ENCODE measurements at regions of chr2 and their contacts with region 1.

Region 1: DNA sequence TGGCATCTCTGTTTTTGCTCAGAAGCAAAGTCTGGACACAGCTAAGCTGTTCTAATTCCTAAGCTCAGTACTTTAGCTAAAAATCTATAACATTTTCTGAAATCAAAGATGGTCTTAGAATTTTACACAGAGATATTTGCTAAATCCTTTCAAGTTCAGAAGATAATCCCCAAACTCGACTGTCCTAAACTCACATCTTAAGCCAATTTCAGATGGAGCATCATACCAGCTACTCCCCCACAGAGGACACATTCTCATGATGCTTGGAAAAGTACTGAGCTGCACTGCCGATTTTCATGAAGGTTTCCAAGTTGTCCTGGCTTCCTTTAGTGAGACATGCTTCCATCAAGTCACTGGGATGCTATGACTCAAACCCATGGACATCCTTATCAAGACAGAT is 535.5 kb downstream of the SUCLG1 start:
- DNase-seq: no peak
- ATAC-seq: no peak
- H3K4me3 ChIP-seq: no peak overlapping the region
- H3K4me3 Mint-ChIP-seq: no peak overlapping the region
- H3K27ac ChIP-seq: no peak overlapping the region
- H3K27ac Mint-ChIP-seq: no peak overlapping the region
- H3K4me1 ChIP-seq: no peaks in the 10 kb centered on the region
- H3K4me1 Mint-ChIP-seq: no peaks in the 10 kb centered on the region
- H3K27me3 ChIP-seq: no peaks in the 10 kb centered on the region
- H3K27me3 Mint-ChIP-seq: peaks cover 2% of the 10 kb centered on the region
- CTCF ChIP-seq: no peak

Region 2: DNA sequence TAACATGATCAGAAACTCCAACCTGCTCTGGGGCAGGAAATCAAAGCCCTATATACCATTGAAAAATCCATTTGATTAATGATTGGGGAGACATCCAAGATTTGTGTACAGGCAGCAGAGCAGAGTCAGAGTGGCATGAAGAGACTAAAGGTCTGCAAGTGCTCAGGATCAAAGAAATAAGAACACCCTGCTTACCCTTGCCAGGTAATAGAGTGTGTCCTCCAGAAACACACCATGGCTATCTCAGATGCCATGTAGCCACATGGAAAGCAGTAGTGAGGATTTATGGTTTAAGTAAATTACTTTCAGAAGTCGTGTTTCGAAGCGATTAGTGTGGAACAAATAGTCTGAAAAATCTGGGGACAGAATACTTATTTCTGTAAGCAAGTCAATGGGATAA is 57.3 kb before region 1 on chr2:
- CTCF ChIA-PET with region 1: no interaction called
- POLR2A ChIA-PET with region 1: no interaction called
- intact Hi-C with region 1: loop called in 1 of 2 experiments (anchors 10 kb)
- DNase-seq: no peak
- ATAC-seq: no peak
- H3K4me3 ChIP-seq: no peak overlapping the region
- H3K4me3 Mint-ChIP-seq: no peak overlapping the region
- H3K27ac ChIP-seq: no peak overlapping the region
- H3K27ac Mint-ChIP-seq: no peak overlapping the region
- H3K4me1 ChIP-seq: no peaks in the 10 kb centered on the region
- H3K4me1 Mint-ChIP-seq: no peaks in the 10 kb centered on the region
- H3K27me3 ChIP-seq: no peaks in the 10 kb centered on the region
- H3K27me3 Mint-ChIP-seq: no peaks in the 10 kb centered on the region
- CTCF ChIP-seq: no peak

Region 3: GRCh38 chr2:83993873-83994632 is 70.5 kb after region 1 on chr2:
- CTCF ChIA-PET with region 1: no interaction called
- POLR2A ChIA-PET with region 1: no interaction called
- intact Hi-C with region 1: no loop called
- DNase-seq: no peak
- ATAC-seq: no peak
- H3K4me3 ChIP-seq: no peak overlapping the region
- H3K4me3 Mint-ChIP-seq: no peak overlapping the region
- H3K27ac ChIP-seq: no peak overlapping the region
- H3K27ac Mint-ChIP-seq: no peak overlapping the region
- H3K4me1 ChIP-seq: no peaks in the 10 kb centered on the region
- H3K4me1 Mint-ChIP-seq: no peaks in the 10 kb centered on the region
- H3K27me3 ChIP-seq: peaks cover 0 to 2% of the 10 kb centered on the region in 2 experiments
- H3K27me3 Mint-ChIP-seq: peaks cover 8% of the 10 kb centered on the region
- CTCF ChIP-seq: no peak

Region 4: GRCh38 chr2:84038866-84039265 is 115.3 kb after region 1 on chr2:
- CTCF ChIA-PET with region 1: no interaction called
- POLR2A ChIA-PET with region 1: no interaction called
- intact Hi-C with region 1: no loop called
- DNase-seq: no peak
- ATAC-seq: no peak
- H3K4me3 ChIP-seq: no peak overlapping the region
- H3K4me3 Mint-ChIP-seq: no peak overlapping the region
- H3K27ac ChIP-seq: no peak overlapping the region
- H3K27ac Mint-ChIP-seq: no peak overlapping the region
- H3K4me1 ChIP-seq: no peaks in the 10 kb centered on the region
- H3K4me1 Mint-ChIP-seq: peaks cover 2% of the 10 kb centered on the region
- H3K27me3 ChIP-seq: no peaks in the 10 kb centered on the region
- H3K27me3 Mint-ChIP-seq: peaks cover 4% of the 10 kb centered on the region
- CTCF ChIP-seq: no peak